ENCODE measurements at regions of chr1 and their contacts with region 1.

Region 1: DNA sequence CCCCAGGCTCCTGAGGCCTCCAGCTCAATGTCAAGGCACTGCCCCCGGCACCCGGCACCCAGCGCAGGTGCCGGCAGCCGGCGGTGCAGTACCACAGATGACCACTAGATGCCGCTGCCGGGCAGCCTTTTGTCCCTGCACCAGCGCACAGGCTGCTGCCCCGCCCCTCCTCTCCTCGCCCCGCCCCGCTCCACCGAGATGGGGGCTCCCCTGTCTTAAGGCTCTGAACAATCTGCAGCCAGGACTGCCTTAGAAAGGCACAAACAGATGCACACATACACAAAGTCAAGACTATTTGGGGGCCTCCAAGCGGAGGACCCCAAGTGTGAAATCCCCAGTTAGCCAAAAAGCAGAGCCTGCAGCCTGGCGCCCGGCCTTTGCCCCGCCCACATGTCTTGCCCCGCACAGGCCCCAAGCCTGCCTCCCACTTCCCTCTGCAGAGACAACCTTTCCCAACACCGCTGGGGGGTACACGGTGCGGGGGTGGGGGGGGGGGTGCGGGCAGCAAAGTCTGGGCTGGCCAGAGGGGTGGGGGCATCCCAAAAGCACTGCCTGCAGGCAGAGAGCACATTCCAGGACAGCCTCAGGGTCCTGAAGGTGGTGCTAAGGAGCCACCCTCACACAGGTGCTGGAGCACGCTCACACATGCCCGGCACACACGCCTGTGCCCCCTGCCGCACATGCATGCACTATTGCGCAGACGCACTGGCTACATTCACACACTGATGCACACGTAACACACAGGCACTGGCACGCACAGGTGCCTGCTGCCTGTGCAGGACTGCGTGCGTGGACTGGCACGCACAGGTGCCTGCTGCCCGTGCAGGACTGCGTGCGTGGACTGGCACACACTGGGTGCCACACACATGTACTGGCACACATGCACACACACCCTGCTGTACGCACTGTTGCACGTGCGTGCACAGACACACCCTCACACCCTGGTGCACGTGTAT is 37.1 kb downstream of the ARHGEF16 start:
- DNase-seq: peak; percentile 93
- ATAC-seq: peak; percentile 96
- H3K4me3 Mint-ChIP-seq: no peak overlapping the region
- H3K27ac Mint-ChIP-seq: no peak overlapping the region
- H3K4me1 Mint-ChIP-seq: peaks cover 3% of the 10 kb centered on the region
- H3K27me3 Mint-ChIP-seq: no peaks in the 10 kb centered on the region

Region 2: GRCh38 chr1:3530926-3531818 is 39.6 kb after region 1 on chr1:
- CTCF ChIA-PET with region 1: no interaction called
- POLR2A ChIA-PET with region 1: no interaction called
- intact Hi-C with region 1: loop called in 1 of 2 experiments (anchors 1 kb)
- DNase-seq: peak; percentile 88
- ATAC-seq: peak; percentile 87
- H3K4me3 Mint-ChIP-seq: peak overlapping the region; percentile 69
- H3K27ac Mint-ChIP-seq: peak overlapping the region; percentile 87
- H3K4me1 Mint-ChIP-seq: peaks cover 13% of the 10 kb centered on the region
- H3K27me3 Mint-ChIP-seq: no peaks in the 10 kb centered on the region

Region 3: DNA sequence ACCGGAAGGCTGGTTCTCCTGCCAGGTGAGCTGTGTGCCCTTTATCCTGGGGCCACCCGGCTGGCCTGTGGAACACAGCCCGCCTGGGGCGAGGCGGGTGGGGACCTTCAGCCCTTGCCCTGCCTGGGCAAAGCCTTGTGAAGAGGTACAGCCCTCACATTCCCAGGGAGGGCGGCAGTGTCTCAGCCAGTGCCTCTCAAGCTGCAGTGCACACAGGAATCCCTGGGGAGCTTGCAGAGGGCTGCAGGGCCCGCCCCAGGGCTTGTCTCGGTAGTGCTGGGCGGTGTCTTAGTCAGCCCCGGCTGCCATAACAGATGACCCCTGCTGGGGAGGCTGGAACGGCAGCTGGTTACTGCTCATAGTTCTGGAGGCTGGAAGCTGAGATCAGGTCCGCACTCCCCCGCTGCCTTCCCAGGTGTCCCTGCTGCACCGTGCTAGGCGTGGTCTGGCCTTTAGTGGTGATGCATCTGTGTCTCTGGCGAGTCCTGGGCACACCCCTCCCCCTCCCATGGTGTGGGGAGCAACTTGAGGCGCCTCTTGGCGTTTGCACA is 378.3 kb after region 1 on chr1:
- CTCF ChIA-PET with region 1: no interaction called
- POLR2A ChIA-PET with region 1: no interaction called
- intact Hi-C with region 1: no loop called
- DNase-seq: no peak
- ATAC-seq: no peak
- H3K4me3 Mint-ChIP-seq: no peak overlapping the region
- H3K27ac Mint-ChIP-seq: no peak overlapping the region
- H3K4me1 Mint-ChIP-seq: peaks cover 3% of the 10 kb centered on the region
- H3K27me3 Mint-ChIP-seq: no peaks in the 10 kb centered on the region

Region 4: DNA sequence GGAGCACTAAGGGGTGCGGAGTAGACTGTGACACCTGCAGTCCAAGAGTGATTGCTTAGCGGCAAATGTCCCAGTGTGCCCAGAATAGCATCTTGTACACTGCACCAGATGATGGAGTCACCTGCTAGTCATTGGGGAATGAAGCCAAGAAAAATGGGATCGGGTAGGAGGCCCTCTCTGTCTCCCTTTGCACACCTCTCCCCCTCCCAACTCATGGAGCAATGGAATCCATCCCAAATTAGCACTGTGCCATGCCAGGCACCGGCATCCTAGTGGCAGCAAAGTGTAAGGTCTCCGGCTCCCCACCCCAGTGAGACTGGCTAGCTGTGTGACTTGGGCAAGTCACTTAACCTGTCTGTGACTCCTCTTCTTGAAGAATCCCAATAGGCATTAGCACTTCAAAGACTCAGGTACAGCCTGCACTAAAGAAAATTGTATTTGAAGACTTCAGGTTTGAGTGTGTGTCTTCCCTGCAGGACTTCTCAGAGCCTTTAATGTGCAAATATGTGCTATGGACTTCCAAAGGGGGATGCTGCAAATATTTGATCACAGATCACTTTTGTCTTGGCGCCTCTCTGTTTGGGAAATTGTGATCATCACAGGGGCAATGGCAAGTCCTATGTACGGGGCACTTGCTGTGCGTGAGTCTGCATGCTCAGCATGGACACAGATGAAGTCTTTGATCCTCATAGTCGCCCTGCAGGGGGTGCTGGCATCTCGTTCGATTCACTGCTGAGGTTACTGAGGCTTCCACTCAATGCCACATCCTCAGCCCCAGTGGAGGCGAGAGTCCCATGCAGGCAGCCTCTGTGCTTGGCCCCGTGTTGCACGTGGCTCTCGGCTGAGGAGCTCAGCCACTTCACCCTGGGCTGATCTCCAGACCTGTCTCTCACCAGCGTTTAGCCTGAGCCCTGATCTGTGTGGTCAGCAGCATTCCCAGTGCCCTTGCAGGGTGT is 681.4 kb after region 1 on chr1:
- CTCF ChIA-PET with region 1: no interaction called
- POLR2A ChIA-PET with region 1: no interaction called
- intact Hi-C with region 1: no loop called
- DNase-seq: peak; percentile 61
- ATAC-seq: peak; percentile 66
- H3K4me3 Mint-ChIP-seq: no peak overlapping the region
- H3K27ac Mint-ChIP-seq: no peak overlapping the region
- H3K4me1 Mint-ChIP-seq: no peaks in the 10 kb centered on the region
- H3K27me3 Mint-ChIP-seq: peaks cover 7% of the 10 kb centered on the region

Measured in activated CD4-positive, alpha-beta T cell treated with anti-CD3 and anti-CD28 coated beads for 36 hours (primary cell).